Naive thymus-derived CD4-positive, alpha-beta T cell (primary cell): ENCODE measurements at regions of chr10 and their contacts with region 1.

Region 1: GRCh38 chr10:97869091-97870042 is 19.7 kb downstream of the GOLGA7B start:
- DNase-seq: peak; percentile 56 to 85 (median 78)
- ATAC-seq: peak; percentile 97
- H3K4me3 ChIP-seq: no peak overlapping the region
- H3K4me3 Mint-ChIP-seq: peak overlapping the region in 9 of 10 donors; percentile 6 to 59 (median 37)
- H3K27ac ChIP-seq: peak overlapping the region; percentile 41
- H3K27ac Mint-ChIP-seq: peak overlapping the region; percentile 38 to 85 (median 68)
- H3K4me1 ChIP-seq: peaks cover 8 to 12% of the 10 kb centered on the region in 2 donors
- H3K4me1 Mint-ChIP-seq: peaks cover 9 to 16% (median 13%) of the 10 kb centered on the region in 7 donors
- H3K27me3 ChIP-seq: no peaks in the 10 kb centered on the region
- H3K27me3 Mint-ChIP-seq: peaks cover 0 to 24% (median 0%) of the 10 kb centered on the region in 5 donors

Region 2: GRCh38 chr10:97210543-97210961 is 658.8 kb before region 1 on chr10:
- CTCF ChIA-PET with region 1: no interaction called
- POLR2A ChIA-PET with region 1: no interaction called
- intact Hi-C with region 1: no loop called
- DNase-seq: peak; percentile 38 to 74 (median 54)
- ATAC-seq: peak; percentile 67
- H3K4me3 ChIP-seq: no peak overlapping the region
- H3K4me3 Mint-ChIP-seq: no peak overlapping the region
- H3K27ac ChIP-seq: no peak overlapping the region
- H3K27ac Mint-ChIP-seq: no peak overlapping the region
- H3K4me1 ChIP-seq: no peaks in the 10 kb centered on the region
- H3K4me1 Mint-ChIP-seq: no peaks in the 10 kb centered on the region
- H3K27me3 ChIP-seq: no peaks in the 10 kb centered on the region
- H3K27me3 Mint-ChIP-seq: peaks cover 0 to 2% (median 0%) of the 10 kb centered on the region in 5 donors

Region 3: DNA sequence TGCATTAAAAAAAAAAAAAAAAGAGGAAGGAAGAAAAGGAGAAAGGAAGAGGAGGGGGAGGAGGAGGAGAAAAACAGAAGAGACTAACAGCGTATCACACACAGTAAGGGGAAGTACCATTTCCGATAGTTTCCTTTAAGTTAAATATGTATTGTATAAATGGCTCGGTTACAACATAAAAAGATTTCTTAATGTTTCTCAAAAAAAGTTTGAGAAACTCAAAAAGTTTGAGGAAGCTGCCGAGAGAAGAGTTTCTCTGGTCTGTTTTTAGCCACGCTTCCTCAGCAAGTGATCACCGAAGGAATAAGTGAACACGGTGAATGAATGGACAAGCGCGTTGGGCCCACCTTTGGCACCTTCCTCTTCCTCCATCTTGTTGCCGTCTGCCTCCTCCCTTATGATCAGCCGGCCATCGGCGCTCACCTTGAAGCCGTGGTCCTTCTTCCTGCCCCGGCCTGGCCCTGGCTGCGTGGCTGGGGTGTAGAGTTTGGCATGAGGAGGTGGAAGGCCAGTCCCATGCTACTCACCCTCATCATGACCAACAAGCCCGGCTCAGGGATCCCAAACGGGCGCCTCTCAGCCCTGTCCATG is 503.5 kb before region 1 on chr10:
- CTCF ChIA-PET with region 1: no interaction called
- POLR2A ChIA-PET with region 1: no interaction called
- intact Hi-C with region 1: no loop called
- DNase-seq: no peak
- ATAC-seq: peak; percentile 82
- H3K4me3 ChIP-seq: no peak overlapping the region
- H3K4me3 Mint-ChIP-seq: no peak overlapping the region
- H3K27ac ChIP-seq: no peak overlapping the region
- H3K27ac Mint-ChIP-seq: peak overlapping the region in 5 of 9 donors; percentile 22 to 52 (median 33)
- H3K4me1 ChIP-seq: no peaks in the 10 kb centered on the region
- H3K4me1 Mint-ChIP-seq: peaks cover 0 to 9% (median 0%) of the 10 kb centered on the region in 7 donors
- H3K27me3 ChIP-seq: no peaks in the 10 kb centered on the region
- H3K27me3 Mint-ChIP-seq: no peaks in the 10 kb centered on the region

Region 4: GRCh38 chr10:97676770-97677581 is 192.4 kb before region 1 on chr10:
- CTCF ChIA-PET with region 1: interaction called, 3 read pairs
- POLR2A ChIA-PET with region 1: no interaction called
- intact Hi-C with region 1: loop called (anchors 1 kb)
- DNase-seq: peak; percentile 35 to 60 (median 48)
- ATAC-seq: peak; percentile 90
- H3K4me3 ChIP-seq: no peak overlapping the region
- H3K4me3 Mint-ChIP-seq: no peak overlapping the region
- H3K27ac ChIP-seq: no peak overlapping the region
- H3K27ac Mint-ChIP-seq: peak overlapping the region in 1 of 9 donors; percentile 13
- H3K4me1 ChIP-seq: no peaks in the 10 kb centered on the region
- H3K4me1 Mint-ChIP-seq: peaks cover 0 to 16% (median 0%) of the 10 kb centered on the region in 7 donors
- H3K27me3 ChIP-seq: no peaks in the 10 kb centered on the region
- H3K27me3 Mint-ChIP-seq: no peaks in the 10 kb centered on the region

Region 5: DNA sequence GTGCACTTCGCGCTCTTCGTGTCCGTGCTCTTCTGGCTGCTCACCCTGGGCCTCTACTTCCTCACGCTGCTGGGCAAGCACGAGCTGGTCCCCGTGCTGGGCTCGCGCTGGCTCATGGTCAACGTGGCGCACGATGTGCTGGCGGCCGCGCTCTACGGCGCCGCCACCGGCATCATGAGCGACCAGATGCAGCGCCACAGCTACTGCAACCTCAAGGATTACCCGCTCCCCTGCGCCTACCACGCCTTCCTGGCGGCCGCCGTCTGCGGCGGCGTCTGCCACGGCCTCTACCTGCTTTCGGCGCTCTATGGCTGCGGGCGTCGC is 155.4 kb before region 1 on chr10:
- CTCF ChIA-PET with region 1: interaction called, 5 read pairs
- POLR2A ChIA-PET with region 1: no interaction called
- intact Hi-C with region 1: loop called in 1 of 2 experiments (anchors 1 kb)
- DNase-seq: peak in 8 of 9 donors; percentile 28 to 67 (median 40)
- ATAC-seq: peak; percentile 83
- H3K4me3 ChIP-seq: peak overlapping the region; percentile 69
- H3K4me3 Mint-ChIP-seq: peak overlapping the region; percentile 95 to 100 (median 99)
- H3K27ac ChIP-seq: no peak overlapping the region
- H3K27ac Mint-ChIP-seq: peak overlapping the region in 7 of 9 donors; percentile 44 to 95 (median 80)
- H3K4me1 ChIP-seq: peaks cover 5 to 6% of the 10 kb centered on the region in 2 donors
- H3K4me1 Mint-ChIP-seq: peaks cover 5 to 21% (median 11%) of the 10 kb centered on the region in 7 donors
- H3K27me3 ChIP-seq: no peaks in the 10 kb centered on the region
- H3K27me3 Mint-ChIP-seq: peaks cover 14 to 43% (median 19%) of the 10 kb centered on the region in 5 donors

Region 6: DNA sequence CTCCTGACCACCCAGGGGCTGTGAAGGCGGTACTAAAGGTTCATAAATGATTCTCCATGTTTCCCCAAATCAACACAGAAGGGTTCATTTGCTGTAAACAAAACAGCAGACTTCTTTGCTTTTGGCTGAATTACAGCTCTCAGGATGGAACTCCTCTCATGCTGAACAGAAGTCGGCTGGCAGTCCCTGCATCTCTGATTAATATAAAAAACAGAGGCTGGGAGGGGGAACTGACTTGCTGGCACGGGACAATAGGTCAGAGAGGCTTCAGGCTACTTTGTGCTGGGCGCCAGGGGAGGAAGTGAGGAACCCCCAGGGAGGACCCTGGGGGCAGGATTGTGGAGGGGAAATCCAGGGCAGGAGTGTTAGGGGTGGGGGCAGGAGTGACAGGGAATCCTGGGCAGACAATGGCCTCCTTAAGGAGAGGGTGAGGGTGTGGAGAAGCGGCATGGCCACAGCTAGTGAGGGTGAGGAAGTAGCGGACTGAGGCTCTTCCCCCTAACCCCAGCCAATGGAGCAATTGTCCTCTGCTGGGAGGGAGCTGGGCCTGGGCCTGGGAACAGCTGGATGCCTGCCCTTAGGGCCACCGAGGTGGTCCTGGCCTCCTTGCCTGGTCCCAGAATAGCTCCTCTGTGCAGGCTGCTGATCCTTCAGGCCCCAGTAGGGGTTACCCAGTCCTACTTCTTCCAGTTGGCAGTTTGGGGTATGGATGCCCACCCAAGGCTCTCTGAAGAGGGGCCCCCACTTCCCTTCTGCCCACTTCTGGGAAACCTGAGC is 88.3 kb before region 1 on chr10:
- CTCF ChIA-PET with region 1: interaction called, 26 read pairs
- POLR2A ChIA-PET with region 1: no interaction called
- intact Hi-C with region 1: no loop called
- DNase-seq: no peak
- ATAC-seq: peak; percentile 4
- H3K4me3 ChIP-seq: peak overlapping the region; percentile 37
- H3K4me3 Mint-ChIP-seq: peak overlapping the region in 9 of 10 donors; percentile 25 to 84 (median 74)
- H3K27ac ChIP-seq: peak overlapping the region; percentile 63
- H3K27ac Mint-ChIP-seq: peak overlapping the region in 8 of 9 donors; percentile 79 to 99 (median 90)
- H3K4me1 ChIP-seq: peaks cover 9 to 32% of the 10 kb centered on the region in 2 donors
- H3K4me1 Mint-ChIP-seq: peaks cover 8 to 39% (median 38%) of the 10 kb centered on the region in 7 donors
- H3K27me3 ChIP-seq: no peaks in the 10 kb centered on the region
- H3K27me3 Mint-ChIP-seq: no peaks in the 10 kb centered on the region

Region 7: GRCh38 chr10:97849687-97850402 is 19.5 kb before region 1 on chr10 and contains the start of gene GOLGA7B:
- CTCF ChIA-PET with region 1: interaction called, 25 read pairs
- POLR2A ChIA-PET with region 1: interaction called, 7 read pairs
- intact Hi-C with region 1: loop called (anchors 1 kb)
- DNase-seq: peak; percentile 43 to 70 (median 66)
- ATAC-seq: peak; percentile 87
- H3K4me3 ChIP-seq: peak within 1 kb of the TSS; percentile 74
- H3K4me3 Mint-ChIP-seq: peak within 1 kb of the TSS; percentile 84 to 94 (median 90)
- H3K27ac ChIP-seq: peak within 1 kb of the TSS; percentile 61
- H3K27ac Mint-ChIP-seq: peak within 1 kb of the TSS; percentile 70 to 93 (median 87)
- H3K4me1 ChIP-seq: peaks cover 25 to 32% of the 10 kb centered on the region in 2 donors
- H3K4me1 Mint-ChIP-seq: peaks cover 21 to 49% (median 37%) of the 10 kb centered on the region in 7 donors
- H3K27me3 ChIP-seq: no peaks in the 10 kb centered on the region
- H3K27me3 Mint-ChIP-seq: peaks cover 0 to 4% (median 0%) of the 10 kb centered on the region in 5 donors
- total RNA-seq, gene GOLGA7B: 5.8 to 8.5 (median 6.5) TPM

Region 8: GRCh38 chr10:98080494-98080893 is 211.1 kb after region 1 on chr10:
- CTCF ChIA-PET with region 1: no interaction called
- POLR2A ChIA-PET with region 1: no interaction called
- intact Hi-C with region 1: no loop called
- DNase-seq: no peak
- ATAC-seq: no peak
- H3K4me3 ChIP-seq: no peak overlapping the region
- H3K4me3 Mint-ChIP-seq: no peak overlapping the region
- H3K27ac ChIP-seq: no peak overlapping the region
- H3K27ac Mint-ChIP-seq: no peak overlapping the region
- H3K4me1 ChIP-seq: no peaks in the 10 kb centered on the region
- H3K4me1 Mint-ChIP-seq: no peaks in the 10 kb centered on the region
- H3K27me3 ChIP-seq: no peaks in the 10 kb centered on the region
- H3K27me3 Mint-ChIP-seq: peaks cover 0 to 16% (median 3%) of the 10 kb centered on the region in 5 donors

Region 9: GRCh38 chr10:98349508-98349922 is 480.1 kb after region 1 on chr10:
- CTCF ChIA-PET with region 1: no interaction called
- POLR2A ChIA-PET with region 1: no interaction called
- intact Hi-C with region 1: no loop called
- DNase-seq: no peak
- ATAC-seq: peak; percentile 68
- H3K4me3 ChIP-seq: no peak overlapping the region
- H3K4me3 Mint-ChIP-seq: no peak overlapping the region
- H3K27ac ChIP-seq: no peak overlapping the region
- H3K27ac Mint-ChIP-seq: no peak overlapping the region
- H3K4me1 ChIP-seq: no peaks in the 10 kb centered on the region
- H3K4me1 Mint-ChIP-seq: peaks cover 0 to 5% (median 0%) of the 10 kb centered on the region in 7 donors
- H3K27me3 ChIP-seq: no peaks in the 10 kb centered on the region
- H3K27me3 Mint-ChIP-seq: peaks cover 26 to 57% (median 50%) of the 10 kb centered on the region in 5 donors